MCF 10A (cell line): ENCODE measurements at regions of chr1 and their contacts with region 1.

Region 1: GRCh38 chr1:184563308-184563707 is 176.5 kb downstream of the C1orf21 start:
- DNase-seq: peak; percentile 56
- H3K4me3 Mint-ChIP-seq: no peak overlapping the region
- H3K27ac Mint-ChIP-seq: no peak overlapping the region
- H3K4me1 Mint-ChIP-seq: peaks cover 32% of the 10 kb centered on the region
- H3K27me3 Mint-ChIP-seq: no peaks in the 10 kb centered on the region
- CTCF ChIP-seq: peak; percentile 57

Region 2: GRCh38 chr1:184075055-184076029 is 488.0 kb before region 1 on chr1:
- CTCF ChIA-PET with region 1: interaction called, 5 read pairs
- POLR2A ChIA-PET with region 1: no interaction called
- intact Hi-C with region 1: loop called (anchors 1 kb)
- DNase-seq: peak; percentile 72
- H3K4me3 Mint-ChIP-seq: no peak overlapping the region
- H3K27ac Mint-ChIP-seq: no peak overlapping the region
- H3K4me1 Mint-ChIP-seq: no peaks in the 10 kb centered on the region
- H3K27me3 Mint-ChIP-seq: no peaks in the 10 kb centered on the region
- CTCF ChIP-seq: peak; percentile 90

Region 3: DNA sequence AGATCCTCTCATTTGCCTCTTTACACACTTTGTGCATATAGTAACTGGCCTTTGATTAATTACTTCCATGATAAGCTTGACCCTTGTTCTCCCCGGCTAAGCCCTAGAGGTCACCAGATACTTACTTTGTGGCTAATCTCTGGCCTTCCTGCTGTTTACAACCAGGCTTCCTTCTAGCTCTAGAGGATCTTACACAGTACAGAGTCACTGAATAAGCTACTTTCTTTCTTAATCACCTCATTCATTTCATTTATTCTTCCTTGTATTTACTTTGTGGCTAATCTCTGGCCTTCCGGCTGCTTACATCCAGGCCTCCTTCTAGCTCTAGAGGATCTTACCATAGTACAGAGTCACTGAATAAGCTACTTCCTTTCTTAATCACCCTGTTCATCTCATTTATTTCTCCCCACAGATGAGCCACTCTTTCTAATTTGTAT is 320.8 kb before region 1 on chr1:
- CTCF ChIA-PET with region 1: interaction called, 8 read pairs
- POLR2A ChIA-PET with region 1: no interaction called
- intact Hi-C with region 1: loop called (anchors 1 kb)
- DNase-seq: peak; percentile 40
- H3K4me3 Mint-ChIP-seq: no peak overlapping the region
- H3K27ac Mint-ChIP-seq: peak overlapping the region; percentile 1
- H3K4me1 Mint-ChIP-seq: no peaks in the 10 kb centered on the region
- H3K27me3 Mint-ChIP-seq: no peaks in the 10 kb centered on the region
- CTCF ChIP-seq: no peak